ENCODE measurements at regions of chr9 and their contacts with region 1.

Region 1: DNA sequence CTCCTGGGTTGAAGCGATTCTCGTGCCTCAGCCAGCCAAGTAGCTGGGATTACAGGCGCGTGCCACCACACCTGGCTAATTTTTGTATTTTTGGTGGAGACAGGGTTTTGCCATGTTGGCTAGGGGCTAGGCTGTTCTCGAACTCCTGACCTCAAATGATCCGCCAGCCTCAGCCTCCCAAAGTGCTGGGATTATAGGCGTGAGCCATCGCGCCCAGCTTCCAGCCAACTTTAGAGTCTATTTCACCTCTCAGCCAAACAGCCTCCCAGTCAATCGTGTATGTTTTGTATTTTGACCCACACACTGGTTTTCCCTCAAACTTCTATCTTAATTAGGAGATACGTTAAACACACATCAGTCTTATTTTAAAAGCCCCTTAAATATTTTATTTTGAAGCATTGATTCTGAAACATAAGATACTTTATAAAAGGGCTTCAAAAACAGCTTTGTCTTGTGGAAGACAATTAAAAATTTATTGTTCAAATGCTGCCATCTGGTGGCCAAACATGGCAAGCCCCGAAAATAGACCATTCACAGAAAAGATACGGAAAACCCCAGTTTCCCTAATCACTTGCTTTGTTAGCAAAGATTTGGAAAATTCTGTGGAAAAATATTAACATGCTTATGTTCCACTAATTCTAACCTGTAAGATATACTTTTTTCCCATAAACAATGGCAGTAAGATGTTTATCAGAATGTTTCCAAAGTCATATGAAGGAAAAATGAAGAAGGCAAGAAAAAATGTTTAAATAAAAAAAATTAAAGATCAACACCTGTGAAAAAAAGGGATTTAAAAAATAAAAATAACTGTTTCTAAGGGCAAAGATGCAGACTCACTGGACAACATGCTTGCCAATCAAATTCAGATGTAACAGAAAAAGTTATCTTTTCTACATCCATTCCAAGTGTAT is 33.1 kb downstream of the APTX start:
- DNase-seq: no peak
- H3K4me3 ChIP-seq: no peak overlapping the region
- H3K27ac ChIP-seq: no peak overlapping the region
- H3K4me1 ChIP-seq: no peaks in the 10 kb centered on the region
- H3K27me3 ChIP-seq: no peaks in the 10 kb centered on the region
- CTCF ChIP-seq: peak; percentile 85

Region 2: DNA sequence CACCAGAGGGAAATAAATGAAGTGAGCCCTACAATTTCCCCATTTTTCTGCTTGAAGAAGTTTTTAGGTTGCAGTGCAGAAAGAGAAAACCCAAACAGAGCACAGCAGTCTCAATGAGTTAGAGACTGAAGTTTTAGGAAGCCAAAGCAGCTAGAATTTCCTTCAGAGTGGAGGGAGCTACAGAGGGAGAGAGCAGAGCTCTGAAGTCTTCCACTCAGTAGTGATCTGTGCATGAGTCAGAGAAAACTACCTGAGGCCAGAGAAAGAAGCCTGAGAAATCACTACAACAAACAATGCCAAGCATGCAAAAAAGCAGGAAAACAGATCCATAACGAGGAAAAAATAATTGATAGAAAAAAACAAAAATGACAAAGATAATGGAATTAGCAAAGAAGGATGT is 377.5 kb before region 1 on chr9:
- intact Hi-C with region 1: loop called (anchors 5 kb)
- DNase-seq: no peak
- H3K4me3 ChIP-seq: no peak overlapping the region
- H3K27ac ChIP-seq: no peak overlapping the region
- H3K4me1 ChIP-seq: no peaks in the 10 kb centered on the region
- H3K27me3 ChIP-seq: peaks cover 47% of the 10 kb centered on the region
- CTCF ChIP-seq: no peak

Measured in left ventricle myocardium inferior (tissue), 1 donor.